ENCODE measurements at regions of chr20 and their contacts with region 1.

Region 1: DNA sequence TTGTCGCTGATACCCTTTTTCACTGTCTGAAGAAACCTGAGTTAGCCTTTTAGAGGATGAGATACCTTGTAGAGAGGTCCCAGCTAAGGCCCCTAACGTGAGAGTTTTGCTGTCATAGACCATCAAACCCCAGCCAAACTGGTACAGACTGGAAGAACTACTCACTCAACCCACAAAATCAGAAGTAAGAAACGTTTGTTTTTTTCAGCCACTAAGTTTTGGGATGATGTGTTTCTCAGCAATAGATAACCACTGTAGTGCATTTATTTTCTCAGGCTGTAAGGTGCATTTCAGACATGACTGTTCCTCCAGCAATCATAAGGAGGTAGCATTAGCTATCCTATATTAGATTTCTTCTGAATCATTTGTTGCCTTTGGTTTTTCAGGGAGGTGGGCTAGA is 407.3 kb upstream of the FLRT3 start:
- DNase-seq: no peak
- ATAC-seq: no peak
- H3K4me3 ChIP-seq: no peak overlapping the region
- H3K4me3 Mint-ChIP-seq: no peak overlapping the region
- H3K27ac ChIP-seq: no peak overlapping the region
- H3K27ac Mint-ChIP-seq: no peak overlapping the region
- H3K4me1 ChIP-seq: no peaks in the 10 kb centered on the region
- H3K4me1 Mint-ChIP-seq: no peaks in the 10 kb centered on the region
- H3K27me3 ChIP-seq: no peaks in the 10 kb centered on the region
- H3K27me3 Mint-ChIP-seq: no peaks in the 10 kb centered on the region

Region 2: DNA sequence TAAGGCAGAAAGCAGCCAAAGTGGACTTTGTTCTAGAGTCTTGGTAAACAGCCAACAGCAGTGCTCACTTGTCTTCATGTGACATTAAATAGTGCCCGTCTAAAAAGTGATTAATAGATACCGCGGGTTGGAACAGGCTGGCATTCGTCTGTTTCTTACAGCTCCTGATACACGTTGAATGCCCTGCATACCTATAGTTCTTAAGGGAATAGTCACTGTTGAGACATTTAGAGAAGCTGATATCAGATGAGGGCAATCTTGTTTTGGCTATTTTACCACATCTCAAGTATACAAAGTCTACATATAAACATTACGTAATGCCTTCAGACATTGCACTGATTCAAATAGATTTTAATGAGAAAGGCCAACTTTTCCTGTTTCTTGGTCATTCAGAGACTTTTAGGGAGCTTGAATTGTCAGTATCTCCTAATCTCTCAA is 32.4 kb before region 1 on chr20:
- CTCF ChIA-PET with region 1: no interaction called
- POLR2A ChIA-PET with region 1: no interaction called
- intact Hi-C with region 1: loop called in 1 of 2 experiments (anchors 1 kb)
- DNase-seq: no peak
- ATAC-seq: no peak
- H3K4me3 ChIP-seq: no peak overlapping the region
- H3K4me3 Mint-ChIP-seq: no peak overlapping the region
- H3K27ac ChIP-seq: no peak overlapping the region
- H3K27ac Mint-ChIP-seq: no peak overlapping the region
- H3K4me1 ChIP-seq: no peaks in the 10 kb centered on the region
- H3K4me1 Mint-ChIP-seq: no peaks in the 10 kb centered on the region
- H3K27me3 ChIP-seq: no peaks in the 10 kb centered on the region
- H3K27me3 Mint-ChIP-seq: no peaks in the 10 kb centered on the region